ENCODE measurements at regions of chr4 and their contacts with region 1.

Region 1: DNA sequence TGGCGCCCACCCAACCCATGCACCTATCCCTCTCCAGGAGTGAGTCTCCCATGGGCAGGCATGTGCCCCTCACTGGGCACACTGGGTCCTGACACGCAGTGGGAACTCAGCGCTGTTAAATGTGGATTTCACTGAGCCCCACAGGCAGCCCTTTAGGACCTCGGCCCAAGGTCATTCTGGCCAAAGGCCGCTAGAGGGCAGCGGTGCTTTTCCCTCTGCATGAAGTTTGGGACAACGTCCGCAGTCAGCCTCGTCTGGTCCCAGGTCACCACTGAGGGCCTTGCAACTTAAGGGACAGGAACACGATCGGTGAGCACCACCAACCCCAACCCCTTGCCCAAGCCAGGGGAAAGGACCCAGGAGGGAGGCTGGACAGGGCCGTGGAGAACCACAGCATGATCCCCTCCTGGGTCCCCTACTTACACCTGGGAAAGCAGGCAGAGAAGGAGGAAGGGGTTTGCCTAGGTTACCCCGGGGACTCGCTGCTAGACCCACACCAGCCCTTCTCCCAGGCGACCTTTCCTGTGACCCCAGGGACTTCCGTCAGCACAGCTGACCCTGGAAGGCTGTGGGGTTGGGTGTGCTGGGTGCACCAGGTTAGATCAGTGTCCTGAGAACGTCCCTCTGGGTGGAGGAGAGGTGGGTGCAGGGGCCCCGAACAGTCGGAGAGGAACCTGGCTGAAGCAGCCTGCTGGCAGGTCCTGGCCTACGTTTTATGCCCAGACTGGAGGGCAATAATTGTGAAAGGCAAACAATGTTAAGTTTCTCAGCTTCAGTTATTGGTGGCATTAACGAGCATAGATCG is 24.0 kb downstream of the CYTL1 start:
- DNase-seq: peak; percentile 78
- H3K4me3 ChIP-seq: no peak overlapping the region
- H3K27ac ChIP-seq: no peak overlapping the region
- H3K4me1 ChIP-seq: peaks cover 26% of the 10 kb centered on the region
- H3K27me3 ChIP-seq: peaks cover 21% of the 10 kb centered on the region

Region 2: GRCh38 chr4:2995546-2996265 is 1999.6 kb before region 1 on chr4:
- in situ Hi-C with region 1: no loop called
- DNase-seq: no peak
- H3K4me3 ChIP-seq: no peak overlapping the region
- H3K27ac ChIP-seq: no peak overlapping the region
- H3K4me1 ChIP-seq: no peaks in the 10 kb centered on the region
- H3K27me3 ChIP-seq: 0 out of 2 replicates have a peak, but pooled peaks cover 3% of the 10 kb centered on the region

Region 3: DNA sequence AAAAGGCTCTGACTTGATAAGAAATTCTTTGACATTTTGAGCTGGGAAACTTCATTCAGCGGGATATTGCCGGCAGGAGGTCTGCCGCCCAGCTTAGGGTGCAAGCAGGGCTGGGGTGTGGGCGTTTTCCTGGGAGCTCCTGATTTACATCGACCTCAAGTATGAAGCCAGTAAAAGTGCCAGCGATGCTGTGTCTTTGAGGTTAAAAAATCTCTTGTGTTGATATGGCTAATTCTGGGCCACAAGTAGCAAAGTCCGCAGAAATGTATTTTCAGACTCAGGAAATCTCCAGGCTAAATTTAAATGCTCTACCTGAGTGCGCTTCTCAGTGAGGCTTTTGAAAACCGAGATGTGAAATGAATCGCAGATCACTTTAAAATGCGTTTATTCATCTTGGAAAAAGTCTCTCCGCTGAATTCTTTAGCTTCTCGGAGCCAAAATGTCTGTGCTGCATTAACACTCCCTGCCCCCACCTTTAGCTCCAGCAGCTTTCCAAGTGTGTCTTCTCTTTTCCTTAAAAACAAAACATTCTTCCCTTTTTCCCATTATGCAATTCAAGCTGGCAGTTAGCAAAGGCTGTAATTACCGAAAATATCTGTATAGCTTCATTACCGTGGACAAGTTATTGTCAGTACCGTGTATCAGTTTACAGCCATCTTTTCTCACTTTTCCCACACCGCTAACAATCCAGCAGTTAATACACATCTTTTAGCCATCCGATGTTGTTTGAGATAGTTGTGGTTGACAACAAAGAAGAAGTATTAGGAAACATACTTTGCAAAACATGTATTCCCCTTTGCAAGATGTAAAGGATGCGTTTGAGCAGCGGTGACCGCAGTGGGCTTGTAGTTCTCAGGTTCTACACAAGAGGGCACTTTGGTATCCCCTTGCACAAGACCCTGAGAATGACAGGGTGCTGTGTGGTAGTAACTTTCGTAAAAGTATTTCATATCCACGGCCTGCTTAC is 317.5 kb before region 1 on chr4:
- in situ Hi-C with region 1: loop called (anchors 25 kb)
- DNase-seq: peak; percentile 83
- H3K4me3 ChIP-seq: peak overlapping the region; percentile 68
- H3K27ac ChIP-seq: peak overlapping the region; percentile 51
- H3K4me1 ChIP-seq: peaks cover 21% of the 10 kb centered on the region
- H3K27me3 ChIP-seq: no peaks in the 10 kb centered on the region

Region 4: GRCh38 chr4:5142726-5143125 is 147.4 kb after region 1 on chr4:
- in situ Hi-C with region 1: loop called (anchors 10 kb)
- DNase-seq: peak; percentile 75
- H3K4me3 ChIP-seq: no peak overlapping the region
- H3K27ac ChIP-seq: no peak overlapping the region
- H3K4me1 ChIP-seq: no peaks in the 10 kb centered on the region
- H3K27me3 ChIP-seq: 0 out of 2 replicates have a peak, but pooled peaks cover under 1% of the 10 kb centered on the region